PC-3 (cell line): ENCODE measurements at regions of chr18 and their contacts with region 1.

Region 1: GRCh38 chr18:48533340-48534070 is 5.3 kb upstream of the CTIF start:
- DNase-seq: no peak
- ATAC-seq: no peak
- H3K4me3 ChIP-seq: no peak overlapping the region
- H3K27ac ChIP-seq: no peak overlapping the region
- H3K4me1 ChIP-seq: 0 out of 2 replicates have a peak, but pooled peaks cover 5% of the 10 kb centered on the region
- H3K27me3 ChIP-seq: 0 out of 2 replicates have a peak, but pooled peaks cover under 1% of the 10 kb centered on the region
- CTCF ChIP-seq: no peak

Region 2: GRCh38 chr18:48519431-48520100 is 13.9 kb before region 1 on chr18:
- CTCF ChIA-PET with region 1: interaction called, 10 read pairs
- POLR2A ChIA-PET with region 1: no interaction called
- intact Hi-C with region 1: no loop called
- DNase-seq: no peak
- ATAC-seq: no peak
- H3K4me3 ChIP-seq: no peak overlapping the region
- H3K27ac ChIP-seq: no peak overlapping the region
- H3K4me1 ChIP-seq: no peaks in the 10 kb centered on the region
- H3K27me3 ChIP-seq: no peaks in the 10 kb centered on the region
- CTCF ChIP-seq: no peak

Region 3: DNA sequence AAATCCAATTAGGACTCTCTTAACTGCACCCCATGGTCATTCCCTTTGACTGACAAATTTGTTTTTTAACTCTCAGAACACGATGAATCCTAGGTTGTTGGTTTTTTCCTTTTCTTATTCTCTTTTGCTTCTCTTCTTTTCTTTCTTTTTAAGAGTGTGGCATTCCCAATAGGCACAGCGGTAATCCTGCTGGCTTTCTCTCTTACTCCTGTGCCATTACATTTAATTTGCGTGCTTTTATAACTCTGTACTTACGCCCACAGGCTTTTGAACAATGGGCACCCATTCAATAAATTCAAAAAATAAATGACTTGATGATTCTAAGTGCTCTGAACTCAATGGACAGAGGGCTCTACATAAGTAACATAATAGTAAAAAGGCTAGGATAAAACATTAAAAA is 606.3 kb after region 1 on chr18:
- CTCF ChIA-PET with region 1: no interaction called
- POLR2A ChIA-PET with region 1: no interaction called
- intact Hi-C with region 1: no loop called
- DNase-seq: no peak
- ATAC-seq: no peak
- H3K4me3 ChIP-seq: no peak overlapping the region
- H3K27ac ChIP-seq: no peak overlapping the region
- H3K4me1 ChIP-seq: no peaks in the 10 kb centered on the region
- H3K27me3 ChIP-seq: no peaks in the 10 kb centered on the region
- CTCF ChIP-seq: no peak